Keratinocyte (primary cell): ENCODE measurements at regions of chr10 and their contacts with region 1.

Region 1: GRCh38 chr10:47095848-47096612 is 184.8 kb downstream of the PTPN20 start:
- DNase-seq: no peak
- H3K4me3 ChIP-seq: no peak overlapping the region
- H3K27ac ChIP-seq: no peak overlapping the region
- H3K4me1 ChIP-seq: no peaks in the 10 kb centered on the region
- H3K27me3 ChIP-seq: no peaks in the 10 kb centered on the region
- CTCF ChIP-seq: no peak

Region 2: GRCh38 chr10:47133871-47134570 is 38.0 kb after region 1 on chr10:
- dilution Hi-C with region 1: loop called (anchors 5 kb)
- DNase-seq: no peak
- H3K4me3 ChIP-seq: no peak overlapping the region
- H3K27ac ChIP-seq: no peak overlapping the region
- H3K4me1 ChIP-seq: no peaks in the 10 kb centered on the region
- H3K27me3 ChIP-seq: no peaks in the 10 kb centered on the region
- CTCF ChIP-seq: no peak